GM18951 (cell line): ENCODE measurements at regions of chr10 and their contacts with region 1.

Region 1: DNA sequence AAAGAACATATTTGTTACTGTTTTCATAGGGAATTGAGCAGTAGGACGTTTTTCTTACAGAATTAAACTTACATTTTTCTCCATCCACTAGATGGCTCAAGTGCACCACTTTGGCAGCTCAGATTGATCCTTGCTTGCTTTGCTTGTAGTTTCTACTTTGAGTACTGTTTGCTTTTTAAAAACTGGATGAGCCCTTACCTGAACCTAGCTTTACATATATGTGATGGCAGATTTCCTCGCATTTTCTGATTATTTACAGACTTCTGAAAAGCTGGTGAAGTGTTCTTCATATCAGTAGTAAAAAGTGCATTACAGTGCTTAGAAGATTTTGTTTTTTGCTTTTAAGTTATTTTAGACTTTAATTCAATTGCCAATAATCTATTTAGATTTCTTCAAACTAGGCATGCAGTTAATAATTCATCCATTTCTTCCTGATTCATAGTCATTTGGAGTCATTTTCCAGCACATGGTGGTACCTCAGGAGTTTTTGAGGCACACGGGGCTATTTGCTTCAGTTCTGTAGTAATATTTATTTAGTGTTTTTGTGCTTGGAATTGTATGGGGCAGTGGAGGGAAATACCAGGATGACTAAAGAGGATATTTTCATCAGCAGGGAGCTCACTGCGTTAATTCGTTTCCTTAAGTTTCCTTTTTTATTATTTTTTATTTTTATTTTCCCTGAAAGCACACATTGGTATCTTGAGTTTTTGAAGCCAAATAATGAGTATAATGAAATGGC is 57.3 kb downstream of the MAPK8 start:
- POLR2A ChIP-seq: no peak

Region 2: DNA sequence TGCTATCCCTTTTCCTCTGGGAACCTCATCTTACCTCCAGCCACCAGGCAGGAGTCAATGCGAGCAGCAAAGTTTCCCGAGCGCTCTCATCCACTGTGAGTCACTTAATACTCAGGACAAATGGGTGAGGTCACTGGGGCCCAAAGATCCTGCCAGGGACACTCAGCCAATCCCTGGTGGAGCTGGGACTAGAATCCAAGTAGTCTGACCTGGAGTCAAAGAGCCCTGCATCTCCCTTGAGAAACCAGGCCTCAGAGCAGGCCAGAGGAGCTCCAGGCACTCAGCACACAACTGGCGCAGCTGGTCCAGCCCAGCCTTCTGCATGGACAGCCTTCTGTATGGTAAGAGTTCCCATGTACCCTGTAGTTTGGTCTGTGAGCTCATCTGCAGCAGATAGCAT is 85.0 kb after region 1 on chr10:
- in situ Hi-C with region 1: no loop called
- POLR2A ChIP-seq: no peak

Region 3: GRCh38 chr10:48506147-48506917 is 142.5 kb after region 1 on chr10:
- in situ Hi-C with region 1: loop called (anchors 10 kb)
- POLR2A ChIP-seq: no peak